ENCODE measurements at regions of chr2 and their contacts with region 1.

Region 1: GRCh38 chr2:68282811-68283418 is 30.6 kb upstream of the PPP3R1 start:
- DNase-seq: peak; percentile 69 to 70
- ATAC-seq: peak; percentile 84 to 88
- H3K4me3 ChIP-seq: no peak overlapping the region
- H3K27ac ChIP-seq: no peak overlapping the region
- H3K4me1 ChIP-seq: 0 out of 3 replicates have a peak, but pooled peaks cover 3% of the 10 kb centered on the region
- CTCF ChIP-seq: peak; percentile 87
- EP300 ChIP-seq: no peak
- POLR2A ChIP-seq: no peak
- RAD21 ChIP-seq: peak; percentile 76 to 80

Region 2: GRCh38 chr2:68251187-68251854 is 31.6 kb before region 1 on chr2:
- CTCF ChIA-PET with region 1: interaction called, 13 read pairs
- POLR2A ChIA-PET with region 1: interaction called, 8 read pairs
- DNase-seq: peak; percentile 79 to 86
- ATAC-seq: peak; percentile 60 to 79
- H3K4me3 ChIP-seq: peak overlapping the region; percentile 95
- H3K27ac ChIP-seq: peak overlapping the region; percentile 97 to 99
- H3K4me1 ChIP-seq: peaks cover 46% of the 10 kb centered on the region
- CTCF ChIP-seq: peak; percentile 57
- EP300 ChIP-seq: no peak
- POLR2A ChIP-seq: no peak
- RAD21 ChIP-seq: peak; percentile 44 to 46; a peak in 3 of 5 replicates

Region 3: DNA sequence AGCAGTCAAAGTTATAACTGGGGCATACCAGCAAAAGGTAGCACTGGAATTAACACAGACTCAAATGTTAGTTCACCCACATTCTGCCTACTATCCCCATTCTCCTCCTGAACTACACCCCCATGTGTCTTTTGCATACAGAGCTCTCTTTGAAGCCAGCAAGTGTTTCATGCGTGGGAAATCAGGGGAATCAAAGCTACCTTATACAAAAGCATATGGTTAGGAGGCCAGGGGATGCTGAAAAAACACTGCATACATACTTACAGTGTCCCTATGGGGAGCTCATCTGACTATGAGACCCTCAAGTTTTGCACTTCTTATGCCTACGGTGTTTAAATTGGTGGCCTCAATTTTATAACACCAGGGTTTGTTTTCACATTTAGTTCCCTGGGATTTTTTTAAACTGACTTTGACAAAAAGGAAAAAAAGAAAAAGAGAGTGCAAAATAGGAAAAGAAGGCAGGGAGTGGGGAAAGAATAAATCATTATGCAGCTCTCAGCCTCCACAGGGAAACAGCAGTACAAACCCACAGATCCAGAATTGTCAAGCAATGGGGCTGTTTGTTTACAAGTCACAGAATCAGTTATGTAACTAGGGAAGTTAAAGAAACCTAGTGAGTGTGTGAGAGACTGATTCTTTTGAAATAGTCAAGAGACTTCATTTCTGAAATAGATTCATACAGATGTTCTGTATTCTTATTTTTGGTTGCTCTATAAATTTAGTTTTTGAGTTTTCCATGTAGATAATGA is 10.5 kb before region 1 on chr2:
- CTCF ChIA-PET with region 1: interaction called, 10 read pairs
- POLR2A ChIA-PET with region 1: no interaction called
- DNase-seq: no peak
- ATAC-seq: no peak
- H3K4me3 ChIP-seq: no peak overlapping the region
- H3K27ac ChIP-seq: no peak overlapping the region
- H3K4me1 ChIP-seq: no peaks in the 10 kb centered on the region
- CTCF ChIP-seq: no peak
- EP300 ChIP-seq: no peak
- POLR2A ChIP-seq: no peak
- RAD21 ChIP-seq: no peak

Region 4: GRCh38 chr2:68423966-68424650 is 141.2 kb after region 1 on chr2:
- CTCF ChIA-PET with region 1: no interaction called
- POLR2A ChIA-PET with region 1: no interaction called
- DNase-seq: no peak
- ATAC-seq: no peak
- H3K4me3 ChIP-seq: no peak overlapping the region
- H3K27ac ChIP-seq: no peak overlapping the region
- H3K4me1 ChIP-seq: peaks cover 16% of the 10 kb centered on the region; the same call in 2 of the 3 replicates
- CTCF ChIP-seq: no peak
- EP300 ChIP-seq: no peak
- POLR2A ChIP-seq: no peak
- RAD21 ChIP-seq: no peak

Region 5: DNA sequence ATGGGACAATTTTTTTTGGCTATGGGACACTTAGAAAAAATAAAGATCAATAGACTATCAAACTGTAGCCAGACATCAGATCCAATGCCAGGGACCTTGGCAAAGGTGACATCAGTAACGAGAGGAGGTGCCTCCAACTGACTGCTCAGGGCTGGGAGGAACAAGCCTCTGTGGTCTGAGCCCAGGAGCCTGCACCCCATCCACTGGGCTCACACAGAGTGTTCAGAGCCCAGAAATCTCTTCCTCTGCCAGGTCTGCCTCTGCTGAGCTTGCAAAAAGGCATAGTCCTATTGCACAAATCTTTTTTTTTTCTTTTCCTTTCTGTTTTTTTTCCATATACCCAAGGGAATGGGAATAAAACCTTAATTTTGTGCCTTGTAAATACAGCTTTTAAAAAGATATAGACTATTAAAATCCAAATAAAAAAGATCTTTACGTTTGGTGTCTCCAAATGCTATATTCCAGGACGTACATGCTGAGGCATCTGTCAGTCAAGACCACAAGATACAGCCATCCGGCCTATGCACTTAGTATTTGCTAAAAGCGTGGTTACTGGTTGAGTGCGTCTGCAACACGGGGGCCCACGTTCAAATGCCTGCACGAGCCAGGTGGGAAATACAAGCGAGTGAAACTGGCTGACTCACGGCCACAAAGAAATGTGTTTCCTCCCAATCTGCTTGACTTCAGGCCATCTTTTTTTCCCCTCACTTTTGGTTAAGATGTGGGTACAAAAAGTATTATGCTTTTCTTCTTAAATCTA is 443.9 kb after region 1 on chr2:
- CTCF ChIA-PET with region 1: no interaction called
- POLR2A ChIA-PET with region 1: no interaction called
- DNase-seq: no peak
- ATAC-seq: no peak
- H3K4me3 ChIP-seq: no peak overlapping the region
- H3K27ac ChIP-seq: no peak overlapping the region
- H3K4me1 ChIP-seq: peaks cover 5% of the 10 kb centered on the region; the same call in 1 of the 3 replicates
- CTCF ChIP-seq: no peak
- EP300 ChIP-seq: no peak
- POLR2A ChIP-seq: no peak
- RAD21 ChIP-seq: no peak